Activated T-helper 1 cell treated with anti-CD3 and anti-CD28 coated beads, Interleukin-12 subunit alpha, Interleukin-12 subunit beta, Interleukin-2, Interleukin-4 antibody, amounts not matched to agents 30 ng/mL and 10 ng/mL and 1 ng/mL, durations not matched to agents 14 hours and 24 hours and 36 hours (primary cell): ENCODE measurements at regions of chr6 and their contacts with region 1.

Region 1: GRCh38 chr6:506508-506907 is 115.0 kb downstream of the IRF4 start:
- DNase-seq: no peak
- H3K4me3 Mint-ChIP-seq: peak overlapping the region; percentile 64
- H3K27ac Mint-ChIP-seq: peak overlapping the region; percentile 96
- H3K4me1 Mint-ChIP-seq: peaks cover 100% of the 10 kb centered on the region
- H3K27me3 Mint-ChIP-seq: no peaks in the 10 kb centered on the region

Region 2: DNA sequence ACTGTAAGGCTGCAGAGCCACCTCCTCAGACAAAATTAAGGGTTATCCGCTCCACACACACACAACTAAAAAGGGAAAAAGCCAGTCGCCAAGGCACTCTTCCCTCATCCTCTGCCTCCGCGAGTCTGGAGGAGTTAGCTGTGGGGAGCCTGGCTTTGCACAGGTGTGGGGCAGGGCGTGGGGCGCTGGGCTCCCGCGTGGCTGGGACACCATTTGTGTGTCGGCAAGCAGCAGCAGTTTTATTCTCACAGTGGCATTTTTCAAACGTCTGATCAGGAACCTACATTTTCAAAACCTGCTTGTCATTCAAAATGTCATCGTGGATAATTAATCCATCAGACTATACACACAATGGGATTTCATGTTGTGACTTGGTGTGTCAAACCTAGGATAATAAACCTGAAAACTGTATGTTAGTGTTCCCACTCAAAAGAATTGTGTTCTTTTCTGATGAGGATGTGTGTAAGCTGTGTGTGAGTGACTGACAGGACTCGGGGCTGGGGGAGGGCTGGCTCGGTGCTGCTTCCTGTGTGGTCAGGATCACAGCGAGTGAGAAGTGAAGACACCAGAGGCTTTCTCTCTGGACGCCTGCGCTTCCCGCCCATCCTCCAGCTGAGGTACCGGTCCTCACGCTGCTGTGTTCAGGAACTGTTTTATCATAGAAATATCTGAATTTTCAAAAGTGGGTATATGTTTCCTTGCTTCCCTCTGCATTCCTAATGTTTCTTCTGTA is 31.9 kb before region 1 on chr6:
- intact Hi-C with region 1: loop called (anchors 1 kb)
- DNase-seq: peak; percentile 75
- H3K4me3 Mint-ChIP-seq: peak overlapping the region; percentile 72
- H3K27ac Mint-ChIP-seq: peak overlapping the region; percentile 86
- H3K4me1 Mint-ChIP-seq: peaks cover 75% of the 10 kb centered on the region
- H3K27me3 Mint-ChIP-seq: no peaks in the 10 kb centered on the region

Region 3: GRCh38 chr6:527989-528673 is 21.6 kb after region 1 on chr6:
- intact Hi-C with region 1: loop called (anchors 1 kb)
- DNase-seq: no peak
- H3K4me3 Mint-ChIP-seq: no peak overlapping the region
- H3K27ac Mint-ChIP-seq: peak overlapping the region; percentile 61
- H3K4me1 Mint-ChIP-seq: peaks cover 20% of the 10 kb centered on the region
- H3K27me3 Mint-ChIP-seq: no peaks in the 10 kb centered on the region

Region 4: DNA sequence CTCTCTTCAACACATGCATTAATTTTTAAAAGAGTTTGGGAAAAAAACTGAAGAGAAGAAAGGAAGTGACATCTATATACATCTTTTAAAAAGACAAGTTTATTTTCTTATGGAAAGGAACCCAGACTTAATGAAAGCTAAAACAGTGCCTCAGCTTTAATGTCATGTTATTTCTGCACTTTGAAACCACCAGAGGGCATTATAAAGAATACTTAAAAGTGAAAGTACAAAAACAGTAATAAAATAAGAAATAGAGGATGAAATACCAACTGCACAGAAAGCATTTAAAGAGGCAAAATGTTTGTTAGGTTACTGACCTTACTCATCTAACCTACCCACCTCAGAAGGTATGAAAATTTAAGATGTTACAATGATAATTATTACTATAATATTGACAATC is 51.6 kb after region 1 on chr6:
- intact Hi-C with region 1: loop called (anchors 1 kb)
- DNase-seq: no peak
- H3K4me3 Mint-ChIP-seq: no peak overlapping the region
- H3K27ac Mint-ChIP-seq: peak overlapping the region; percentile 55
- H3K4me1 Mint-ChIP-seq: peaks cover 50% of the 10 kb centered on the region
- H3K27me3 Mint-ChIP-seq: no peaks in the 10 kb centered on the region

Region 5: DNA sequence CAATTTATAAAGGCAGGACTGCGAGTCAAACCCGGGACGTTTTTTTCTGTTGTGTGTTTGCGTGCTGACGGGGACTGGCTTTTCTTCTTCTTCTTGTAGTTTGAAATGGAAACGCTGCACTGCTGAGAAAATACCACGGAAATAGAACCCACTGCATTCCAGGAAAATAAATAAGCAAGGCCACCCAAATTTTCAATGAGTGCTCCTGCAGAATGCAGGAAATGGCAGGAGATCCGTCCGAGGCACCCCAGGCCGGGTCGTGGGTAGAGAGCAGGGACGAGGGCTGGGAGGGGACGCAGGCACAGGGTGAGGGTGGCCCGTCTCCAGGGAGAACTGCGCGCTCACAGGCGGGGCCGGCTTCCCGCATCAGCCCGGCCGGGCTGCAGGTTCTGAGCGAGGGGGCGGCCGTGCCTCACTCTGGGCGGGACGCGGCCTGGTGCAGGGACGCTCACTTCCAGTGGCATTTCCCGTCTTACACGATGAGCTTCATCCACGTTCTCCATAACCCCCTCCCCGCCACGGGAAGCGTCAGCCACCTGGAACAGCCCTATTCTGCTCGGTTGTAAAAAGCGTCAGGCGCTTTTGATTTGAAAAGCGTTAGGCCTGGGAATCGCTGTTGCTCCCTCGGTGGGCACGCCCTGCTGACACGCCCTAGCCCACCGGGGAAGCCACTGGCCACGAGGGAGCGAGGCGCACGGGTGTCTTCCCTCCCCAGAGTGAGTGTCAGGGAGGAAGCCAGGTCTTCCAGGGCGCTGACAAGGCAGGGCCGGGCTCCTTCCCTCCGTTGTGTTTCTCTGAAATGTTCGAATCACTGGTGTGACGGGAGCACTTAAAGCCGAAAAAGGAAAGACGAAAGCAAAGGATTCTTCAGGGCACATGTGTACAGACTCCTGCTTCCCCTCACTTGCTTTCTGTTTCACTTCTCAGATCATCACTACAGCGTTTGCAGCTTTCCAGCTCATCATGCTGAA is 204.4 kb after region 1 on chr6:
- intact Hi-C with region 1: loop called (anchors 5 kb)
- DNase-seq: peak; percentile 64
- H3K4me3 Mint-ChIP-seq: peak overlapping the region; percentile 95
- H3K27ac Mint-ChIP-seq: peak overlapping the region; percentile 99
- H3K4me1 Mint-ChIP-seq: peaks cover 44% of the 10 kb centered on the region
- H3K27me3 Mint-ChIP-seq: no peaks in the 10 kb centered on the region